H1 (cell line): ENCODE measurements at regions of chr3 and their contacts with region 1.

Region 1: DNA sequence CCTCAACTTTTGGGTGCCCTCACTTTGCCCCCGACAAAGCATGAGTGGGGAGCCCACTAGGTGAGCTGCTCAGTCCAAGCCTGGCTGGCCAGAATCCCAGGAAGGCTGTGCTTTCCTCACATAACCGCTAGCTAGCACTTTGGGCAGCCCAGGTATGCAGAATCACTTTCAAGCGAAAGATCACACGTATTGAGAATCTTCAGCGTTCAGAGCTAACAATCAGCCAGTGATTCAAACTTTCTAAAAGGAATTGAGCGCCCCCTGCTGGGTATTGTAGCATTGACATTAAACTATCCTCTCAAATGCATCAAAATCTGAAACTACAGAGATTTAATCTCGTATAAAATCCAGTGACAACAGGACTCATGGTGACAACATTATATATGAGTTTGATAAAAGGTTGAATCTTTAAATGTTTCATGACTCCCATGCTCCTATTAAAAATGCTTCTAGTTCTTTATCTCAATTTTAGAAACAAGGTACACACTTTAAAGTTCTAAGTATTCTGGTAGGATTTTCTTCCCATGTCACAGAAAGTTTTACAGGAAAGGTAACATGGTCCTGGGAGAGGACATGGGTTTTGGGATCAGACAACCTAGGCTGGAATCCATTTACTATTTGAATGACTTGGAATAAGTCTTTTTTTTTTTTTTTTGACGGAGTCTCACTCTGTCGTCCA is 11.8 kb downstream of the ANAPC13 start:
- DNase-seq: peak in 1 of 2 experiments; percentile 88
- H3K4me3 ChIP-seq: no peak overlapping the region
- H3K27ac ChIP-seq: no peak overlapping the region
- H3K4me1 ChIP-seq: peaks cover 0 to 3% (median 1%) of the 10 kb centered on the region in 4 experiments; a peak in 3 of 7 replicates
- H3K27me3 ChIP-seq: no peaks in the 10 kb centered on the region; a peak in 1 of 7 replicates
- CTCF ChIP-seq: peak in 2 of 3 experiments; percentile 55 to 72; a peak in 3 of 4 replicates
- EP300 ChIP-seq: no peak
- POLR2A ChIP-seq: no peak
- RAD21 ChIP-seq: peak; percentile 85 to 89

Region 2: GRCh38 chr3:134299185-134299887 is 174.7 kb before region 1 on chr3:
- CTCF ChIA-PET with region 1: interaction called, 15 read pairs
- POLR2A ChIA-PET with region 1: no interaction called
- DNase-seq: no peak
- H3K4me3 ChIP-seq: no peak overlapping the region
- H3K27ac ChIP-seq: no peak overlapping the region
- H3K4me1 ChIP-seq: 0 out of 7 replicates have a peak, but pooled peaks cover 0 to 2% (median 0%) of the 10 kb centered on the region in 4 experiments
- H3K27me3 ChIP-seq: no peaks in the 10 kb centered on the region
- CTCF ChIP-seq: peak in 2 of 3 experiments; percentile 32 to 43; a peak in 3 of 4 replicates
- EP300 ChIP-seq: no peak
- POLR2A ChIP-seq: no peak
- RAD21 ChIP-seq: peak; percentile 52 to 73

Region 3: GRCh38 chr3:134364061-134364935 is 109.7 kb before region 1 on chr3:
- CTCF ChIA-PET with region 1: interaction called, 46 read pairs
- POLR2A ChIA-PET with region 1: interaction called, 24 read pairs
- DNase-seq: peak; percentile 88 to 92
- H3K4me3 ChIP-seq: peak overlapping the region in 3 of 4 experiments; percentile 1 to 44 (median 42); a peak in 5 of 8 replicates
- H3K27ac ChIP-seq: peak overlapping the region; percentile 77
- H3K4me1 ChIP-seq: peaks cover 18 to 29% (median 26%) of the 10 kb centered on the region in 4 experiments
- H3K27me3 ChIP-seq: no peaks in the 10 kb centered on the region; a peak in 1 of 7 replicates
- CTCF ChIP-seq: no peak
- EP300 ChIP-seq: peak; percentile 83 to 88; a peak in 2 of 3 replicates
- POLR2A ChIP-seq: peak in 1 of 2 experiments; percentile 83; a peak in 2 of 3 replicates
- RAD21 ChIP-seq: no peak; a peak in 1 of 4 replicates

Region 4: DNA sequence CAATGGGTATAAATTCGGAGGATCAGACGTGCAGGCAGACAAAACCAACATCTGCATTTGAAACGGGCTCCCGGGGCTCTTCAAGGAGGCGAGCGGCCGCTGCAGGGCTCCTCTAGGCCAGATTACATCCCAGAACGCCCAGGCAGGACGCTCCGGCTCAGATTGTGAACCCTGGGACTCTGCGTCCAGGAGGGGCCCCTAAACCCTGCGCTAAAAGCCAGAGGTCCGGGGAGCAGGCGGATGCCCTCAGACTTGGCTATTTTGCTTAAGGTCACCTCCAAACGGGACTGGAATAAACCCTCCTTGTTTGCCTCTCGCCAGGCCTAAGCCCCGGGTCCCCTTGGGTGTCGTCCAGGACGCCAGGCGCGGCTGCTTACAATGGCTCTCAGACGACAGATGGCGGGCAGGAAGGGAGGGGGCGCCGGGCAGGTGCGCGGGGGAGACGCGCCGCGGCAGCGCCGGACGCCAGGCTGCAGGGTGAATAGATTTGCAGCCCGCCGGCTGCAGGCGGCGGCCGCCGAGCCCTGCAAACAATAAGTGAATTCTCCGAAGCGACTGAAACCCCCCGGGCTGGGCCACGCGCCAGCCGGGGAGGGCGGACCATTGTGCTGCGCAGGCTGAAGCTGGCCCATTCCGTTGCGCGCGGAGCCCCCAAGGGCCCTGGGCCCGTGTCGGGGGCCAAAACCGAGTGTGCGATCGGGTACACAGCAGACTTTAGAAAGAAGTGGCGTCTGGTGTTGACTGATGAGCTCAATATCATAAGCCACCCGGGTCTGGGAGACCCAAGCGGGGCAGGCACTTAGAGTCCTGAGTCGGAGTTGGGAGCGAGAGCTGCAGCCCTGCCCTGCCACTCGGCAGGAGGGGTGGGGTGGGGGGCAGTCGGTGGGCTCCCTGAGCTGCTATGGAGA is 67.4 kb before region 1 on chr3:
- CTCF ChIA-PET with region 1: interaction called, 10 read pairs
- POLR2A ChIA-PET with region 1: interaction called, 3 read pairs
- DNase-seq: peak; percentile 50 to 83
- H3K4me3 ChIP-seq: peak overlapping the region; percentile 37 to 63 (median 50)
- H3K27ac ChIP-seq: no peak overlapping the region
- H3K4me1 ChIP-seq: peaks cover 9 to 20% (median 17%) of the 10 kb centered on the region in 4 experiments
- H3K27me3 ChIP-seq: peaks cover 29 to 50% (median 45%) of the 10 kb centered on the region in 4 experiments
- CTCF ChIP-seq: no peak
- EP300 ChIP-seq: 0 out of 3 replicates have a peak, but pooled peaks of 1 of the 2 experiments have one; percentile 36
- POLR2A ChIP-seq: no peak; a peak in 1 of 3 replicates
- RAD21 ChIP-seq: peak in 1 of 2 experiments; percentile 6; a peak in 1 of 4 replicates

Region 5: GRCh38 chr3:134485718-134486576 is 11.9 kb after region 1 on chr3 and contains the starts of genes ANAPC13 and CEP63:
- CTCF ChIA-PET with region 1: interaction called, 20 read pairs
- POLR2A ChIA-PET with region 1: interaction called, 8 read pairs
- DNase-seq: peak; percentile 86 to 95
- H3K4me3 ChIP-seq: peak within 1 kb of the TSS; percentile 68 to 96 (median 80)
- H3K27ac ChIP-seq: peak within 1 kb of the TSS; percentile 83
- H3K4me1 ChIP-seq: peaks cover 0 to 10% (median 7%) of the 10 kb centered on the region in 4 experiments; a peak in 6 of 7 replicates
- H3K27me3 ChIP-seq: no peaks in the 10 kb centered on the region
- CTCF ChIP-seq: no peak
- EP300 ChIP-seq: peak in 1 of 2 experiments; percentile 81; a peak in 2 of 3 replicates
- POLR2A ChIP-seq: peak; percentile 72 to 85
- RAD21 ChIP-seq: no peak
- total RNA-seq, gene ANAPC13: 31.0 and 34.0 TPM in 2 replicates
- total RNA-seq, gene CEP63: 15.5 and 18.2 TPM in 2 replicates